ENCODE measurements at regions of chr11 and their contacts with region 1.

Region 1: GRCh38 chr11:75768112-75768908 is at the start of gene DGAT2:
- DNase-seq: peak; percentile 47
- ATAC-seq: peak; percentile 82
- H3K4me3 ChIP-seq: peak within 1 kb of the TSS; percentile 79
- H3K27ac ChIP-seq: peak within 1 kb of the TSS; percentile 90
- H3K4me1 ChIP-seq: peaks cover 44% of the 10 kb centered on the region
- H3K27me3 ChIP-seq: no peaks in the 10 kb centered on the region
- CTCF ChIP-seq: peak; percentile 32 to 39 (median 39); a peak in 4 of 6 replicates
- EP300 ChIP-seq: no peak; a peak in 1 of 4 replicates
- POLR2A ChIP-seq: peak; percentile 88
- RAD21 ChIP-seq: peak; percentile 52
- polyA plus RNA-seq, gene DGAT2: 5.1 to 5.5 TPM

Region 2: GRCh38 chr11:75562048-75562835 is 206.1 kb before region 1 on chr11 and contains the start of gene SERPINH1:
- CTCF ChIA-PET with region 1: no interaction called
- POLR2A ChIA-PET with region 1: no interaction called
- RAD21 ChIA-PET with region 1: no interaction called
- SMC1A ChIA-PET with region 1: no interaction called
- in situ Hi-C with region 1: no loop called
- intact Hi-C with region 1: loop called (anchors 1 kb)
- DNase-seq: peak; percentile 58
- ATAC-seq: peak; percentile 95
- H3K4me3 ChIP-seq: peak within 1 kb of the TSS; percentile 82
- H3K27ac ChIP-seq: peak within 1 kb of the TSS; percentile 94
- H3K4me1 ChIP-seq: peaks cover 5% of the 10 kb centered on the region
- H3K27me3 ChIP-seq: no peaks in the 10 kb centered on the region
- CTCF ChIP-seq: no peak
- EP300 ChIP-seq: no peak
- POLR2A ChIP-seq: peak; percentile 86
- RAD21 ChIP-seq: no peak
- polyA plus RNA-seq, gene SERPINH1: 0.34 to 1.4 TPM

Region 3: GRCh38 chr11:75597636-75598035 is 170.7 kb before region 1 on chr11:
- CTCF ChIA-PET with region 1: interaction called, 3 read pairs
- POLR2A ChIA-PET with region 1: no interaction called
- RAD21 ChIA-PET with region 1: no interaction called
- SMC1A ChIA-PET with region 1: no interaction called
- in situ Hi-C with region 1: no loop called
- intact Hi-C with region 1: loop called (anchors 10 kb)
- DNase-seq: no peak
- ATAC-seq: peak; percentile 94
- H3K4me3 ChIP-seq: no peak overlapping the region
- H3K27ac ChIP-seq: no peak overlapping the region
- H3K4me1 ChIP-seq: peaks cover 8% of the 10 kb centered on the region
- H3K27me3 ChIP-seq: no peaks in the 10 kb centered on the region; a peak in 2 of 4 replicates
- CTCF ChIP-seq: peak; percentile 64 to 79 (median 73)
- EP300 ChIP-seq: no peak
- POLR2A ChIP-seq: no peak
- RAD21 ChIP-seq: peak; percentile 53

Region 4: DNA sequence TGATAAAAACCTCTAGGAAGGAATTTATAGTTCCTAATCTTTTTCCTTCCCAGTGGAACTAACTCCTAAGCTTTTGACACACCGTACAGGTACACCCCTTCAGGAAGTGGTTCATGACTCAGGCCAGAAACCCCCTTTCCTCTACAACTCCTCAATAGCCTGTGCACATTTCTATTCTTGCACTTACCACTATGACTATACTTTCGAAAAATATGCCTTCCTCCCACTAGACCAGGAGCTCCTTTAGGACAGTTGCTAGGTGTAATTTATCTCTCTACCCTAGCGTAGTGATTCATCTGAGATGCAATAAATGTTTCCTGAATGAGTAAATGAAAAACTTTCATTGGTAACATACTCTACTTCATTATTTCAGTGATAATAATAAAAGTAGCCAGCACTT is 114.0 kb before region 1 on chr11:
- CTCF ChIA-PET with region 1: no interaction called
- POLR2A ChIA-PET with region 1: no interaction called
- RAD21 ChIA-PET with region 1: no interaction called
- SMC1A ChIA-PET with region 1: no interaction called
- in situ Hi-C with region 1: no loop called
- intact Hi-C with region 1: no loop called
- DNase-seq: peak; percentile 63
- ATAC-seq: peak; percentile 97
- H3K4me3 ChIP-seq: no peak overlapping the region
- H3K27ac ChIP-seq: 0 out of 2 replicates have a peak overlapping the region, but pooled peaks have one; percentile 44
- H3K4me1 ChIP-seq: peaks cover 15% of the 10 kb centered on the region
- H3K27me3 ChIP-seq: no peaks in the 10 kb centered on the region
- CTCF ChIP-seq: no peak
- EP300 ChIP-seq: no peak
- POLR2A ChIP-seq: no peak
- RAD21 ChIP-seq: no peak

Region 5: DNA sequence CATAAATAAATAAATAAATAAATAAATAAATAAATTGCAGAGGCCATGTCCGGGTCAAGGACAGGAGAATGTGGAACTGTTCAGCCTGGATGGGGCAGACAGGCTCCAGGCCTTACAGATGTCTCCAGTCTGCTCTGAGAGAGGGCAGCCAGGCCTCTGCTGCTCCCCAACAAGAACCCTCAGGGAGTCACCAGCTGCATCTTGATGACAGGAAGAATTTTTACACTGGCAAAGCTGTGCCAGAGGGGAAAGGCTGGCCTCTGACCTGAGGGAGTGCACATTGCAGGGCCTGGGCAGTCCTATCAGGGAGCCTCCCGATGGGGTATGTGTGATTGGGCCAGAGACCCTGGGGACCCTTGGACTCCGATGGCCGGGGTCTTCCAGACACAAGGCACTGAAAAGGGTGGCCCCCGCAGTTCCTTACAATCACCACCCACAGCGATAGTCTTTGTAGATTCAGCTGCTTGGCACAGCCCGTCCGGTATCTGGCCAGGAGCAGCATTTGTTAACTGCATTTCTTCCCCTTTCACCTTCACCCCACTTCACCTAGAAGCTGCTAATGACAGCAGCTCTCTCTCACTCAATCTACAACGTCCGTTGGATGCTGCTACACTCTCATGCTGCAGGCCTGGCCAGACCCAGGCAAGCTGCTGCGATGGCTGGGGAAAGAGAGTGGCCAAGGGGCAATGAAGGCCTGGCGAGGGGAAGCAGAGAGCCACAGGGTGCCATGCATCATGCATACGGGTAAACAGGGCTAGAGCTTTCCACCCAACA is 42.6 kb before region 1 on chr11:
- CTCF ChIA-PET with region 1: interaction called, 3 read pairs
- POLR2A ChIA-PET with region 1: no interaction called
- RAD21 ChIA-PET with region 1: interaction called, 4 read pairs
- SMC1A ChIA-PET with region 1: interaction called, 4 read pairs
- in situ Hi-C with region 1: loop called (anchors 5 kb)
- intact Hi-C with region 1: loop called (anchors 1 kb)
- DNase-seq: no peak
- ATAC-seq: no peak
- H3K4me3 ChIP-seq: no peak overlapping the region
- H3K27ac ChIP-seq: no peak overlapping the region
- H3K4me1 ChIP-seq: no peaks in the 10 kb centered on the region
- H3K27me3 ChIP-seq: no peaks in the 10 kb centered on the region
- CTCF ChIP-seq: no peak
- EP300 ChIP-seq: no peak
- POLR2A ChIP-seq: no peak
- RAD21 ChIP-seq: no peak

Region 6: DNA sequence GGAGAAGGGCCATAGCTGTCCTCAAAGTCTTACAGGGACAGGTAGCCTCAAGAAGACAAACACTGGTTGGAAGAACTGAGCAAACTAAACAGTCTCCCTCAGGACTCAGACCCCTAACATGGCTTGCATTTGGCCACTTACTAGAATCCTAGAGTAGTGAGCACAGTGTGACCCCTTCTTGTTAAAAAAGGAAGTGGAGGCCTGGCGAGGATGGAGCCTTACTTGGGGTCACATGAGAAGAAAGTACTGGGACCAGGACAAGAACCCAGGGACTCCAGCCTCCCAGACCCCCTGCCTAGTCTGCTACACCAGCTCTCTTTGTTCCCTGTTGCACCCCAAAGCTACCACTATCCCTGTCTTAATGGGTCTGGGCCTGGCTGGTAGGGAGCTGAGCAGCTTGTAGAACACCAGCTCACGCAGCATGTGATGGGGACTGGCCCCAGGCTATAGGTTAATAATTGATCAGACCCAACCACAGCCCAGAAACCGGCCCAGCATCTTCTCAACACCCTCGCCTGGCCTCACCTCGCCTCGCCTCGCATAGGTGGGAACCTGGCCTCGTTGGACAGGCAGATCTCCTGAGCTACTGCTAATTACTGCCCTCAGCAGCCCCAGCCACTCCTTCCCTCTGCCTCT is 17.9 kb after region 1 on chr11:
- CTCF ChIA-PET with region 1: interaction called, 44 read pairs
- POLR2A ChIA-PET with region 1: interaction called, 27 read pairs
- RAD21 ChIA-PET with region 1: interaction called, 21 read pairs
- SMC1A ChIA-PET with region 1: interaction called, 16 read pairs
- in situ Hi-C with region 1: no loop called
- intact Hi-C with region 1: no loop called
- DNase-seq: no peak
- ATAC-seq: peak; percentile 96
- H3K4me3 ChIP-seq: no peak overlapping the region
- H3K27ac ChIP-seq: no peak overlapping the region
- H3K4me1 ChIP-seq: no peaks in the 10 kb centered on the region
- H3K27me3 ChIP-seq: no peaks in the 10 kb centered on the region
- CTCF ChIP-seq: no peak
- EP300 ChIP-seq: no peak
- POLR2A ChIP-seq: no peak
- RAD21 ChIP-seq: no peak

Measured in GM12878 (cell line).